IMR-90 (cell line): ENCODE measurements at regions of chr10 and their contacts with region 1.

Region 1: DNA sequence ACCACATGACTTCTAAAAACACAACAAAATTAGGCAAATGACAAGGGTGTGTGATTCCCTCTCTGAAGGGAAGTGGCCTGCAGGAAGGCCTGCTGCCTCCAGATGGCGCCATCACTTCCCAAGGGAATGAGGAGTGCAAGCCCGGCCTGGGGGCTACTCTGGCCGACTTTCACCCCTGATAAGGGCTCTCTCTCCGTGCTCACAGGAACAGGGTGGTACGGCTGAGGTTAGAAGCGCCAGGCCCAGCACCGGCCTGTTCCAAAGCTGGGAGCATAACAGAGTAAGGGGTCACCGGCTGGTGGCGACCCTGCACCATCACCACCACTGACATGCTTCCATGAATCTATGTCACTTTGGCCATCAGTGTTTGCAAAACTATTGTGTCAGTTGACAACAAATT is 13.1 kb downstream of the RBP3 start:
- DNase-seq: peak; percentile 16
- ATAC-seq: peak; percentile 67
- H3K4me3 ChIP-seq: no peak overlapping the region
- H3K27ac ChIP-seq: no peak overlapping the region
- H3K4me1 ChIP-seq: no peaks in the 10 kb centered on the region
- H3K27me3 ChIP-seq: peaks cover 33% of the 10 kb centered on the region
- CTCF ChIP-seq: peak; percentile 68
- POLR2A ChIP-seq: no peak
- RAD21 ChIP-seq: peak; percentile 65

Region 2: GRCh38 chr10:47176903-47177868 is 184.1 kb before region 1 on chr10:
- CTCF ChIA-PET with region 1: no interaction called
- POLR2A ChIA-PET with region 1: no interaction called
- dilution Hi-C with region 1: no loop called
- in situ Hi-C with region 1: no loop called
- intact Hi-C with region 1: no loop called
- DNase-seq: peak; percentile 79
- ATAC-seq: peak; percentile 84
- H3K4me3 ChIP-seq: no peak overlapping the region
- H3K27ac ChIP-seq: peak overlapping the region; percentile 9; the same call in 1 of the 2 replicates
- H3K4me1 ChIP-seq: peaks cover 12% of the 10 kb centered on the region
- H3K27me3 ChIP-seq: no peaks in the 10 kb centered on the region; the same call in 1 of the 2 replicates
- CTCF ChIP-seq: no peak
- POLR2A ChIP-seq: no peak
- RAD21 ChIP-seq: no peak

Region 3: GRCh38 chr10:47438857-47439474 is 77.7 kb after region 1 on chr10:
- CTCF ChIA-PET with region 1: interaction called, 3 read pairs
- POLR2A ChIA-PET with region 1: no interaction called
- dilution Hi-C with region 1: no loop called
- in situ Hi-C with region 1: no loop called
- intact Hi-C with region 1: loop called (anchors 2 kb)
- DNase-seq: peak; percentile 74
- ATAC-seq: peak; percentile 100
- H3K4me3 ChIP-seq: no peak overlapping the region
- H3K27ac ChIP-seq: no peak overlapping the region
- H3K4me1 ChIP-seq: no peaks in the 10 kb centered on the region
- H3K27me3 ChIP-seq: peaks cover 34% of the 10 kb centered on the region
- CTCF ChIP-seq: peak; percentile 74
- POLR2A ChIP-seq: no peak
- RAD21 ChIP-seq: peak; percentile 85